H1 (cell line): ENCODE measurements at regions of chr1 and their contacts with region 1.

Region 1: GRCh38 chr1:164625001-164625617 is 66.1 kb downstream of the PBX1 start:
- DNase-seq: no peak
- H3K4me3 ChIP-seq: no peak overlapping the region
- H3K27ac ChIP-seq: no peak overlapping the region
- H3K4me1 ChIP-seq: peaks cover 0 to 16% (median 10%) of the 10 kb centered on the region in 4 experiments; a peak in 4 of 7 replicates
- H3K27me3 ChIP-seq: no peaks in the 10 kb centered on the region
- CTCF ChIP-seq: peak in 1 of 3 experiments; percentile 39; a peak in 1 of 4 replicates
- EP300 ChIP-seq: no peak
- POLR2A ChIP-seq: no peak
- RAD21 ChIP-seq: 0 out of 4 replicates have a peak, but pooled peaks of 1 of the 2 experiments have one; percentile 6

Region 2: DNA sequence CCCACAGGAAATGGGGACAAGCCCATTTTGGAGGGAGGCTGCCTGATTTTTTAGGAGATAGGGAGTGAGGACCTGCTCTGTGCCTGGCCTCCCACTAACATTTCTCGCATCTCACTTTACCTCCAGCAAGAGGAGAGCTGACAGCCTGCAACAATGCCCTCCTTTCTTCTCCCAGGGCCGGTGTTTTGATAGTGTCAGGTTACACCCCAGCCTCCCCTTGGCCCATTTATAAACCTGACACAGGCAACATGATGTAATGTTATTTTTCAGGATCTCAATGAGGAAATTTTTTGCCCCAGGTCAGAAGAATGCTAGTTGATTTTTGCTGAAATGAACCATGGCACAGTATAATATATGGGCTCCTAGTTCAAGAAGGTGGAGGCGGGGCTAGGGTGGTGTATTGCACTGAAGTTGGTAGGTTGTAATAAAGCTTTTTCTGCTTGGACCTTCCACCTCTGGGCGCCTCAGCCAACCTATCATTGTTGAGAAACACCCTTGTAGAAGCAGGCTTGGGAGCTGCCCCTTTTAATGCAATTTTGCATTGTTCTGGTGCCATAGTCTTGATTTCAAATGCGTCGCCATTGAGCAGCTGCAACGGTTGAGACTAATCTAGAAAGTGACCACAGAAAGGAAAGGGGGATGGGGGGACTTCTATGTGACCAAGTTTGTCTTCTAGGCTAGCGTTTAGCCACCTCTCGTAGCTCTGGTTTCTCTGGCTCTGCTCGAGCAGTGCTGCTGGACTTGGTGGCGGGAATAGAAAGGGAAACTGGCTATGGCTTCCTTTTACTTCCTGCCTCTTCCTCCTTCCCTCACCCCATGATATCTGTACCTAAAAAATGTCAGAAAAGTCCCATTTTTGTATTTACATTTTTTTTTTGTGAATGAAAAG is 13.1 kb before region 1 on chr1:
- CTCF ChIA-PET with region 1: interaction called, 16 read pairs
- POLR2A ChIA-PET with region 1: interaction called, 7 read pairs
- DNase-seq: no peak
- H3K4me3 ChIP-seq: peak overlapping the region in 1 of 4 experiments; percentile 35; a peak in 1 of 8 replicates
- H3K27ac ChIP-seq: no peak overlapping the region
- H3K4me1 ChIP-seq: peaks cover 15 to 57% (median 45%) of the 10 kb centered on the region in 4 experiments
- H3K27me3 ChIP-seq: no peaks in the 10 kb centered on the region
- CTCF ChIP-seq: no peak
- EP300 ChIP-seq: no peak
- POLR2A ChIP-seq: no peak
- RAD21 ChIP-seq: no peak

Region 3: DNA sequence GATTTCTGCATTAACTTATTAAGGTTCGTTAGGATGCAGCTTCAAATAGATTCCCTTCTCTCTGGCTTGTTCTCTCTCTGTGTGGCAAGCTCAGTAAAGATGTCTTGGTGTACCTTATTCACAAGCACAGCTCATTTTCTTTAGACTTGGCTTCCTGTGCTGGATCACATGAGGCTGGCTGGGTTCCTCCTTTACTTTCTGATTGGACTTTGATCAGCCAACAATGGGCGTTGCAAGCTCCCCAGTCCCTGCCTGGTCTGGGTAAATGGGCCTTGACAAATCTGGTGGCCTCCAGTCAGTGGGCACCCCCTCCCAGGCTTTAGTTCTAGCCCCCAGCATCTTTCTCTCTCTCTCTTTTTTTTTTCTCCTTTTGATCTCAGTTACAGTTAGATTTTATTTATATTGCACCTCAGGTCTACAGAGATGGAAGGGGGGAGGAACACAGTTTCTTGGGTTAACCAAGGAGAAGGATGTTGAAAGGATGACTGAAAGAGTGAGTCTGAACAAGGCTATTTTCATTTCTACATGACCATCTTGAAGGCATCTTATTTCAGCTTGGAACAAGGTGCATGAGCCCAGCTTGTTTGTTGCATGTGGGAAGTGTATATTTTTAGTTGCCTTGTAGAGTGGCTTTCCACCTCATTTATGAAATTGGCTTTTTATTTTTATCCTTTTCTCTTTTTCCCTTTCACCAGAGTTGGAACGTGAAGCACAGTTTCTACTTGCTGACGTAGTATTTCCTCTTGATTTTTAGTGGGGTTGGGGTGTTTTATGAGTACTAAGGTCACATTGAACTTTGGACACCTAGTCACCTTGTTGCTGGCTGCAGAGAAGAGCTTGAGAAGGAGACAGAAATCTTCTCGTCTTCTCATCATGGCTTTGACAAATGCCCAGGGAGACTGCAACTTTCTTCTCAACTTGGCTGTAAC is 11.0 kb after region 1 on chr1:
- CTCF ChIA-PET with region 1: interaction called, 34 read pairs
- POLR2A ChIA-PET with region 1: interaction called, 3 read pairs
- DNase-seq: no peak
- H3K4me3 ChIP-seq: peak overlapping the region in 1 of 4 experiments; percentile 40; a peak in 1 of 8 replicates
- H3K27ac ChIP-seq: no peak overlapping the region
- H3K4me1 ChIP-seq: peaks cover 12 to 50% (median 37%) of the 10 kb centered on the region in 4 experiments
- H3K27me3 ChIP-seq: no peaks in the 10 kb centered on the region
- CTCF ChIP-seq: no peak
- EP300 ChIP-seq: no peak
- POLR2A ChIP-seq: no peak
- RAD21 ChIP-seq: no peak

Region 4: GRCh38 chr1:164644774-164645235 is 19.7 kb after region 1 on chr1:
- CTCF ChIA-PET with region 1: interaction called, 11 read pairs
- POLR2A ChIA-PET with region 1: no interaction called
- DNase-seq: no peak
- H3K4me3 ChIP-seq: no peak overlapping the region
- H3K27ac ChIP-seq: no peak overlapping the region
- H3K4me1 ChIP-seq: peaks cover 8 to 35% (median 20%) of the 10 kb centered on the region in 4 experiments; a peak in 5 of 7 replicates
- H3K27me3 ChIP-seq: no peaks in the 10 kb centered on the region
- CTCF ChIP-seq: no peak
- EP300 ChIP-seq: no peak
- POLR2A ChIP-seq: no peak
- RAD21 ChIP-seq: no peak

Region 5: DNA sequence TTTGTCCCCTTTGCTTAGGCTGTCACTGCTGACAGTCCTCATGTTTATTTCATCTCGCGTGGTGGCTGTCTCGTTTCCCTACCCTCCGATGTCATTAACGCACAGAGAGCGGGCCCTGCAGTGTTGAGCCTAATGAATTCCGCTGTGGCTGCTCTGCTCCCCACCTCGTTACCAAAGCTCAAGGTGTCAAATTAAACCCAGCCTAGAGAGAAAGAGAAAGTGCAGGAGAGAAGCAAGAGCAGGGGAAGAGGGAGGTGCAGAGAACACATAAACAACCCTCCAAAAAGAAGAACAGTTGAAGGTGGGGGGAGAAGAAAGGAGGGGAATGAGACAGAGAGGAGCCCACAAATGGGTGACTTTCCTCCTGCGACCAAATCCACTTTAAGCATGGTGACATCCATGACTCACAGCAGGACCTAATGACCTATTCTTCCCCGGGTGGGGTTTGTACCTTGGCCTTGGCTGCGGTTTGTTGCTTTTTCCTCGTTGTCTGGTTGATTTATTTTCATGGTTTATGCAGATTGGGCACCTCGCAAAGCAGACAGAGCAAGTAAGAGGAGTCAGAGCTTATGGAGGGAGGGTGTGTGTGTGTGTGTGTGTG is 26.3 kb after region 1 on chr1:
- CTCF ChIA-PET with region 1: interaction called, 11 read pairs
- POLR2A ChIA-PET with region 1: no interaction called
- DNase-seq: no peak
- H3K4me3 ChIP-seq: no peak overlapping the region
- H3K27ac ChIP-seq: no peak overlapping the region
- H3K4me1 ChIP-seq: peaks cover 13 to 29% (median 22%) of the 10 kb centered on the region in 4 experiments
- H3K27me3 ChIP-seq: no peaks in the 10 kb centered on the region
- CTCF ChIP-seq: no peak
- EP300 ChIP-seq: no peak
- POLR2A ChIP-seq: no peak
- RAD21 ChIP-seq: no peak

Region 6: DNA sequence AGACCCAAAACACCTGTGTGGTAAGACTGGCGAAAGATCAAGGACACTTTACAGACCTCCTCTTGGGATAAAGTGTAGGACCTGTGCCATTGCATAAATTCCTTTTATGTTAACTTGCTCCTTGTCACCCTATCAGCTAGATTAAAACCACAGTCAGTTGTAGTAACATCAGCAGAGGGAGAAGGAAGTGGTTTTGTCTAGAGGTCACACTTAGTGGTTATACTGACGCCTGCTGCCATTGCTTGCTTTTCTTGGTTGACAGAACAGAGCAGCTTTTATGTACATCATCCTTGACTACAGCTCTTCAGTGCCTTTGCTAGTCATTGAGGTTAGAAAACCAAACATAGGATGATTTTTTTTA is 35.3 kb after region 1 on chr1:
- CTCF ChIA-PET with region 1: interaction called, 16 read pairs
- POLR2A ChIA-PET with region 1: no interaction called
- DNase-seq: no peak
- H3K4me3 ChIP-seq: no peak overlapping the region
- H3K27ac ChIP-seq: no peak overlapping the region
- H3K4me1 ChIP-seq: peaks cover 6 to 17% (median 16%) of the 10 kb centered on the region in 4 experiments; a peak in 6 of 7 replicates
- H3K27me3 ChIP-seq: no peaks in the 10 kb centered on the region
- CTCF ChIP-seq: no peak
- EP300 ChIP-seq: no peak
- POLR2A ChIP-seq: no peak; a peak in 1 of 3 replicates
- RAD21 ChIP-seq: no peak